ENCODE measurements at regions of chr2 and their contacts with region 1.

Region 1: DNA sequence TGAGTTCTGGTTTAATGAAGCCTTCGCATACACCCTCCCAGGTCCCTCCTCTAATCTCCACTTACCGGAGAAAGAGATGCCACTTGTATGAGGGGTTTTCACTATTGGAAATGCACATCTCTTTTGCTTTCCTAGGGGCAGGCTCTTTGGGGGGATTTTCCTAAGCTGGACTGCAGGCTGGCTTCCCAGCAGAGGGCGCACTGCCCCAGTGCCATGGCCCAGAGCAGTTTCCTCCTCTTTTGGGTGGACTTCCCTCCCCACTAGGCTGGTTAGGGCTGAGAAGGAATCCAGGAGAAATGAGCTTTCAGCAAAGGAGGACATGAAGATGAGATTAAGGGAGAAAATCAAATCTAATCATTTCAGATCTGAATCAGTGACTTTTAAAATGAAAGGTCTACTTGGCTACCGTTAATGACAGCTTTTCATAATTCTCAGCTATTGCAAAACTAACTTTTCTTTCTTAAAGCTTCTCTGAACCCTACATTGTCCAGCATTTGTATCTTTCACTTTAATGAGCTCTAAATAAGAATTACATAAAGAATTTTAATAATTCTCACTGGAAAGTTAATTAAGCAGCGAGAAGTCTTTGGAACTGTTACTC is 784.1 kb upstream of the FANCL start:
- H3K4me3 Mint-ChIP-seq: no peak overlapping the region
- H3K27ac Mint-ChIP-seq: no peak overlapping the region
- H3K4me1 Mint-ChIP-seq: no peaks in the 10 kb centered on the region
- H3K27me3 Mint-ChIP-seq: no peaks in the 10 kb centered on the region

Region 2: GRCh38 chr2:60152226-60152833 is 1127.1 kb after region 1 on chr2:
- intact Hi-C with region 1: loop called (anchors 2 kb)
- H3K4me3 Mint-ChIP-seq: no peak overlapping the region
- H3K27ac Mint-ChIP-seq: no peak overlapping the region
- H3K4me1 Mint-ChIP-seq: peaks cover 6% of the 10 kb centered on the region
- H3K27me3 Mint-ChIP-seq: no peaks in the 10 kb centered on the region

Region 3: DNA sequence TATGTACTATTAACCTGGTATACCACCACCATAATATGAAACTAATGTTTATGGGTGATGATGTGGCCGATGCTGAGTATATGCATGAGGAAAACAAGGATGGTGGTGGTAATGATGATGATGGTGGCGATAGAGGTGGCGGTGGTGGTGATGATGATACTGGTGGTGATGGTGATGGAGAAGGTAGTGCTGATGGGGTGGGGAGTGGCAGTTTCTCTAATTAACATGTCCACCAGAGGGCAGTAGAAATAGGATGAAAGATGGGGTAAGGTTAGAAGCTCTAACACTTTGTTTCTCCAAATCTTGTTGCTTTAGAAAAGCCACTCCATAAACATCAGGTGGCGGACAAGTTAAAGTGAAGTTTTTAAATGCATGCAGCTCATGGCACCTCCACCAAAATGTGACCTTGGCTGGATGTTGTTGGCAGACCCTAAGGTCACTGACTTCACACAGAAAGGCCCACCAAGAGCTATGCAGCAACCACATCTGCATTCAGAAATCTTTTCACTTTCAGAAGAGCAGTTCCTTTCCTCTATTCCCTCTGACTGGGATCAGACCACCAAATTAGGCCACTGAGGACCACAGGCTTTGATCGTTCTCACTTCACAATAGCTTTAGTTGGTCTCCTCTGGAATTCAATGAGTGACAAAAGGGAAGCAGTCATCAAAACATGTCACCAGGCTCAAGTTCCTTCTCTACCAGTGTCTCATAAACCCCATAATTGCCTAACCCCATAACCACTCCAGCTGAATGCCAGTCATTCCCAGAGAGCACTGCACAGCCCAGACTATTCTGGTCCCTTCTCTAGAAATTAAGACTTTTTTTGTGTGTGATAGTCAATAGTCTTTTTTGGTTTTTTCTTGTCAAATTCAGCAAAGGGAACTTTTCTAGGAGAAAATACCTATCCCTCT is 1535.7 kb after region 1 on chr2:
- intact Hi-C with region 1: loop called (anchors 5 kb)
- H3K4me3 Mint-ChIP-seq: no peak overlapping the region
- H3K27ac Mint-ChIP-seq: no peak overlapping the region
- H3K4me1 Mint-ChIP-seq: peaks cover 38% of the 10 kb centered on the region
- H3K27me3 Mint-ChIP-seq: peaks cover 6% of the 10 kb centered on the region

Measured in dendritic cell treated with granulocyte-macrophage colony-stimulating factor and Interleukin-4, amounts not matched to agents 40 ng/mL and 50 ng/mL, for 4 days (primary cell).